ENCODE measurements at regions of chr12 and their contacts with region 1.

Region 1: GRCh38 chr12:92570056-92570753 is 132.6 kb upstream of the PLEKHG7 start:
- DNase-seq: peak; percentile 86
- ATAC-seq: peak; percentile 91
- H3K4me3 ChIP-seq: peak overlapping the region in 3 of 5 experiments; percentile 30 to 55 (median 53)
- H3K4me3 Mint-ChIP-seq: no peak overlapping the region
- H3K27ac ChIP-seq: peak overlapping the region; percentile 29 to 75
- H3K27ac Mint-ChIP-seq: no peak overlapping the region
- H3K4me1 ChIP-seq: peaks cover 23 to 25% of the 10 kb centered on the region in 2 donors
- H3K4me1 Mint-ChIP-seq: peaks cover 26% of the 10 kb centered on the region
- H3K27me3 ChIP-seq: no peaks in the 10 kb centered on the region
- H3K27me3 Mint-ChIP-seq: no peaks in the 10 kb centered on the region
- CTCF ChIP-seq: peak; percentile 99

Region 2: GRCh38 chr12:91361864-91362263 is 1208.3 kb before region 1 on chr12:
- CTCF ChIA-PET with region 1: interaction called, 6 read pairs
- POLR2A ChIA-PET with region 1: no interaction called
- intact Hi-C with region 1: loop called (anchors 1 kb)
- DNase-seq: peak; percentile 56
- ATAC-seq: no peak
- H3K4me3 ChIP-seq: no peak overlapping the region
- H3K4me3 Mint-ChIP-seq: no peak overlapping the region
- H3K27ac ChIP-seq: no peak overlapping the region
- H3K27ac Mint-ChIP-seq: no peak overlapping the region
- H3K4me1 ChIP-seq: no peaks in the 10 kb centered on the region
- H3K4me1 Mint-ChIP-seq: peaks cover 7% of the 10 kb centered on the region
- H3K27me3 ChIP-seq: no peaks in the 10 kb centered on the region
- H3K27me3 Mint-ChIP-seq: peaks cover 10% of the 10 kb centered on the region
- CTCF ChIP-seq: peak; percentile 75

Region 3: GRCh38 chr12:91877022-91877421 is 693.2 kb before region 1 on chr12:
- CTCF ChIA-PET with region 1: interaction called, 3 read pairs
- POLR2A ChIA-PET with region 1: no interaction called
- intact Hi-C with region 1: loop called (anchors 10 kb)
- DNase-seq: peak; percentile 84
- ATAC-seq: peak; percentile 90
- H3K4me3 ChIP-seq: peak overlapping the region in 1 of 5 experiments; percentile 10
- H3K4me3 Mint-ChIP-seq: peak overlapping the region; percentile 74
- H3K27ac ChIP-seq: peak overlapping the region; percentile 48 to 76
- H3K27ac Mint-ChIP-seq: peak overlapping the region; percentile 93
- H3K4me1 ChIP-seq: peaks cover 19 to 22% of the 10 kb centered on the region in 2 donors
- H3K4me1 Mint-ChIP-seq: peaks cover 27% of the 10 kb centered on the region
- H3K27me3 ChIP-seq: no peaks in the 10 kb centered on the region
- H3K27me3 Mint-ChIP-seq: no peaks in the 10 kb centered on the region
- CTCF ChIP-seq: no peak

Region 4: DNA sequence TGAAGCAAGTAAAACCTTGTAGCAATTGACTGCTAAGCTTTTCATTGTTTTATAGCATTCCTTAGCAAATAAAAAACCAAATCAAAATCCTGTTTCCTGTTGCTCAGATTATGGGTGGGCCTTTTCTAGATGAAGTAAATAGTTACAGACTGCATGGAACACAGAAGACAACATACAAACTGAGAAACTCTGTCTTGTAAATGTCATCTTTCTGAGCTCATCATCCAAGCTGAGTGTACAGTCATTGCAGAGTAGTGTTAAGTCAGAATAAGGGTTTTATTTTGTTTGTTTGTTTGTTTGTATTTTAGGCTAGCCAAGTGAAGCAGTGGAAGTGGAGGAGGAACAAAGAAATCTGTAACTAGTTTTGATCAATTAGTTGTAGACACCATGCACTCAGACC is 400.2 kb before region 1 on chr12:
- CTCF ChIA-PET with region 1: interaction called, 10 read pairs
- POLR2A ChIA-PET with region 1: interaction called, 5 read pairs
- intact Hi-C with region 1: loop called (anchors 1 kb)
- DNase-seq: no peak
- ATAC-seq: no peak
- H3K4me3 ChIP-seq: no peak overlapping the region
- H3K4me3 Mint-ChIP-seq: peak overlapping the region; percentile 29
- H3K27ac ChIP-seq: peak overlapping the region; percentile 91 to 95
- H3K27ac Mint-ChIP-seq: peak overlapping the region; percentile 75
- H3K4me1 ChIP-seq: peaks cover 46 to 63% of the 10 kb centered on the region in 2 donors
- H3K4me1 Mint-ChIP-seq: peaks cover 68% of the 10 kb centered on the region
- H3K27me3 ChIP-seq: no peaks in the 10 kb centered on the region
- H3K27me3 Mint-ChIP-seq: no peaks in the 10 kb centered on the region
- CTCF ChIP-seq: no peak

Region 5: GRCh38 chr12:92445253-92446082 is 124.7 kb before region 1 on chr12:
- CTCF ChIA-PET with region 1: interaction called, 85 read pairs
- POLR2A ChIA-PET with region 1: interaction called, 15 read pairs
- intact Hi-C with region 1: loop called (anchors 1 kb)
- DNase-seq: peak; percentile 89
- ATAC-seq: peak; percentile 71
- H3K4me3 ChIP-seq: peak overlapping the region in 4 of 5 experiments; percentile 0 to 43 (median 25)
- H3K4me3 Mint-ChIP-seq: peak overlapping the region; percentile 80
- H3K27ac ChIP-seq: peak overlapping the region; percentile 99
- H3K27ac Mint-ChIP-seq: peak overlapping the region; percentile 96
- H3K4me1 ChIP-seq: peaks cover 90 to 93% of the 10 kb centered on the region in 2 donors
- H3K4me1 Mint-ChIP-seq: peaks cover 91% of the 10 kb centered on the region
- H3K27me3 ChIP-seq: no peaks in the 10 kb centered on the region
- H3K27me3 Mint-ChIP-seq: no peaks in the 10 kb centered on the region
- CTCF ChIP-seq: no peak

Region 6: DNA sequence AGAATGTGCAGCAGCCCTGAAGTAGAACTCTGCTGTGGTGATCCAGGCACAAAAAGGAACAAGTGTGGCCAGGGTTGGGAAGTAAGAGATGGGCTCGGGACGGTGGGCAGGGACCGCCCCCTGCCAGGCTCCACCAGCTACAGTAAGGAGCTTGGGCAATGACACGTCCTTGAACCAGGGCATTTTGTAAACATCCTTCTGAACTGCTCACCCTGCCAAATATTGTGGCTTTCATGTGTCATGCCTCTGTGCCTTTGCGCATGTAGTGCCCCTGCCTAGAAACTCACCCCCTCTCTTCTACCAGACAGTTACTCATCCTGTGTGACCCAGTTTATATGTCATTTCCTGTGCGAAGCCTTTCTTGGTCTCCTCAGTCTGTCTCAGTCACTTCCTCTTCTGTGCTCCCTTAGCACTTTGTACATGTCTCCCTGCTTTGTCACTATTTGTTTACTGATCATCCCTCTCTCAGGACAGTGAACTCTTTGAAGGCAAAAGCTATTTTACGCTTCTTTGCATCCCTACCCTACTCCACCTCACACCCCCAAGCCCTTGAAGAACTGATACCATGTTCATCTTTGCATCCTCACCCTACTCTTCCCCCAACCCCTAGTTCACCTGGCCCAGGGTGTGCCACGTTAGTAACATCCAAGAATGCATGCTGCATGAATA is 23.7 kb after region 1 on chr12:
- CTCF ChIA-PET with region 1: interaction called, 32 read pairs
- POLR2A ChIA-PET with region 1: no interaction called
- intact Hi-C with region 1: loop called (anchors 1 kb)
- DNase-seq: peak; percentile 94
- ATAC-seq: peak; percentile 93
- H3K4me3 ChIP-seq: peak overlapping the region in 2 of 5 experiments; percentile 20 to 22
- H3K4me3 Mint-ChIP-seq: peak overlapping the region; percentile 69
- H3K27ac ChIP-seq: peak overlapping the region; percentile 86 to 97
- H3K27ac Mint-ChIP-seq: peak overlapping the region; percentile 94
- H3K4me1 ChIP-seq: peaks cover 21 to 25% of the 10 kb centered on the region in 2 donors
- H3K4me1 Mint-ChIP-seq: peaks cover 34% of the 10 kb centered on the region
- H3K27me3 ChIP-seq: no peaks in the 10 kb centered on the region
- H3K27me3 Mint-ChIP-seq: no peaks in the 10 kb centered on the region
- CTCF ChIP-seq: no peak